Dendritic cell treated with granulocyte-macrophage colony-stimulating factor and Interleukin-4, amounts not matched to agents 40 ng/mL and 50 ng/mL, for 4 days (primary cell): ENCODE measurements at regions of chr6 and their contacts with region 1.

Region 1: DNA sequence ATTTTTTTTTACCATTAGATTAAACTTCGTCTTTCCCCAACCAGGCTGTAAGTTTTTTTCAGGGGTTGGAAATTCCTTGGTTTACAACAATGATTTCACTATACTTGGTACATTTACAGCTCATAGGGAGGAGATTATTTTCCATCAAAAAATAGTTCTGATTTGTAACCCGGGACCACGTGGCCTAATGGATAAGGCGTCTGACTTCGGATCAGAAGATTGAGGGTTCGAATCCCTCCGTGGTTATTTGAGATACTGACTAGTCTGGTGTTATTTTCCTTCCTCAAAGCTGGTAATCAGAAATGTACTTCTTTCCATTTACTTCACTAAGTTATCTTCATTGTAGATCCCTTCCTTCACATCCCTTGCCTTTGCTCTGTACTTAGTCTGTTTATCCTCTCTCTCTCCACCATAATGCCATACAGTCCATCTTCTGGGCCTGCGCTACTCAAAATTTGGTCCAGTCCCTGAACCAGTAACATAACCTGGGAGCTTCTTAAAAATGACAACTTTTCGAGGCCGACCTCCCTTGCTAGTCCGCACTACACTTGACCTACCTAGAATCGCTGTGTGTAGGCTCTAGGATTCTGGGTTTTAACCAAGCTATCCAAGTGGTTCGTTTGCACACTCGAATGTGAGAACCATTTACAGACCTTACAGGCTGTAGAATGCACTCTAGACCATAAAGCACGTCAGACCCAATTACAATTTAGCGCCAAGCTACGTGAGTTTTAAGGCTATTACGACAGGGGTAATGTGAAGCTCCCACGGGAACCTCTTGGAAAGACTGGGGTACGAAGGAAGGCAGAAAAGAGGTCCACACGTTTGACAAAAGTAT is 42.1 kb upstream of the BTN3A2 start:
- H3K4me3 Mint-ChIP-seq: peak overlapping the region; percentile 78
- H3K27ac Mint-ChIP-seq: peak overlapping the region; percentile 81
- H3K4me1 Mint-ChIP-seq: peaks cover 31% of the 10 kb centered on the region
- H3K27me3 Mint-ChIP-seq: peaks cover 77% of the 10 kb centered on the region

Region 2: GRCh38 chr6:26075063-26075717 is 247.7 kb before region 1 on chr6:
- intact Hi-C with region 1: no loop called
- H3K4me3 Mint-ChIP-seq: no peak overlapping the region
- H3K27ac Mint-ChIP-seq: no peak overlapping the region
- H3K4me1 Mint-ChIP-seq: peaks cover 8% of the 10 kb centered on the region
- H3K27me3 Mint-ChIP-seq: peaks cover 2% of the 10 kb centered on the region

Region 3: DNA sequence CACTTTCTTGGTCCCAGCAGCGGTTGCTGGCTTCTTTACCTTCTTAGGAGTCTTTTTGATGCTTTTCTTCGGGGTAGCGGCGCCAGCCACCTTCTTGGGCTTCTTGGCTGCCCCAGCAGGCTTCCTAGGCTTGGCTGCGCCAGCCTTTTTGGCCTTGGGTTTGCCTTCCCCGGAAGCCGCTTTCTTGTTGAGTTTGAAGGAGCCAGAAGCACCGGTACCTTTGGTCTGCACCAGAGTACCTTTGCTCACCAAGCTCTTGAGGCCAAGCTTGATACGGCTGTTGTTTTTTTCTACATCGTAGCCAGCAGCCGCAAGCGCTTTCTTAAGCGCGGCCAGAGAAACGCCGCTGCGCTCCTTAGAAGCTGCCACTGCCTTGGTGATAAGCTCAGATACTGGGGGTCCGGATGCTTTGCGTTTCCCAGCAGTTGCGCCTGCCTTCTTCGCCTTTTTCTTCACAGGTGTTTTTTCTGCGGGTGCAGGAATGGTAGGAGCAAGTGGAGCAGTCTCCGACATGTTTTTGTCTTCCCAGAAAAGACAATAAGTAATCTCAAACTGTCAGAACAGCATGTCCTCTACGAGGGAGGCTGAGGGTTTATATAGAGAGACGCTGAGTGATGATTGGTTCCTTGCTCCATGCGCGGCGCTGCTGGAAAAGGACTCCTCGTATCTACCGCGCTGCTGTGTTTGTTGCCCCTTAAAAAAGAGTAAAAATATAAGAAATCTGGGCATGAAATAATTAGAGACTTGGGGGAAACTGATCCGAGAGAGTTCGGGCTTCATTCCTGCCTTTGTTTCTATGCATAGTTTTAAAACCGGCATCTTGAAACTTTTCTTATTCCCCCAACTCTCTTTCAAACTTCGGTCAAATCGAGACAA is 88.2 kb before region 1 on chr6:
- intact Hi-C with region 1: no loop called
- H3K4me3 Mint-ChIP-seq: peak overlapping the region; percentile 83
- H3K27ac Mint-ChIP-seq: peak overlapping the region; percentile 87
- H3K4me1 Mint-ChIP-seq: peaks cover 33% of the 10 kb centered on the region
- H3K27me3 Mint-ChIP-seq: no peaks in the 10 kb centered on the region

Region 4: GRCh38 chr6:26270903-26271667 is 51.8 kb before region 1 on chr6:
- intact Hi-C with region 1: loop called (anchors 5 kb)
- H3K4me3 Mint-ChIP-seq: peak overlapping the region; percentile 60
- H3K27ac Mint-ChIP-seq: no peak overlapping the region
- H3K4me1 Mint-ChIP-seq: peaks cover 11% of the 10 kb centered on the region
- H3K27me3 Mint-ChIP-seq: no peaks in the 10 kb centered on the region